PC-3 (cell line): ENCODE measurements at regions of chr22 and their contacts with region 1.

Region 1: DNA sequence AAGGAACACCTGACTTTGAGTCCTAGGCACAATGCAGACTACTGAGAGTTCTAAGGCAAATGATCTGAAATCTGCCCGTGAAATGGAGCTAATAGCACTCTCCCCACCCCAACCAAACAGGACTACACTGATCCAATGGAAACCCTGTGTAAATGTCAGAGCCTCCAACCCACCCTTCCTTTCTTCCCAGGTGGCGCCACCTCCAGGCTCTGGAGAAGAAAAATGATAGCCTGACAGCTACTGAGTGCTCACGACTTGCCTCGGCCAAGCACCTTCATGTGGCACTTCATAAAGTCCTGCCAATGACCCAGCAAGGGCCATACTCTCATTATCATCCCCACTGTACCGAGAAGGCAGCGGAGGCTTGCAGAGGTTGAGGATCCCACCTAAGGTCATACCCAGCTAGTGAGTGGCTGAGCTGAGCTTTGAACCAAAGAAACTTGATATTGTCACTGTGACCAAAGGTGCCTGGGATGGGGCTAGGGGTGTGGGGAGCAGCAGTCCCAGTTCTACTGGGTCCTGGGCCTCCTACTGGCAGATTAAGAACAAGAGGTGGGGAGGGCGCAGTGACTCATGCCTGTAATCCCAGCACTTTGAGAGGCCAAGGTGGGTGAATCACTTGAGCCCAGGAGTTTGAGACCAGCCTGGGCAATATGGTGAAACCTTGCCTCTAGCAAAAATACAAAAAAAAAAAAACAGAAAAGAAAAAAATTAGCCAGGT is 20.5 kb downstream of the TST start:
- DNase-seq: no peak
- ATAC-seq: no peak
- H3K4me3 ChIP-seq: no peak overlapping the region
- H3K27ac ChIP-seq: no peak overlapping the region
- H3K4me1 ChIP-seq: no peaks in the 10 kb centered on the region
- H3K27me3 ChIP-seq: peaks cover 2% of the 10 kb centered on the region
- CTCF ChIP-seq: peak; percentile 34; the same call in 1 of the 2 replicates

Region 2: GRCh38 chr22:37021710-37022482 is 23.1 kb after region 1 on chr22:
- CTCF ChIA-PET with region 1: no interaction called
- POLR2A ChIA-PET with region 1: no interaction called
- intact Hi-C with region 1: no loop called
- DNase-seq: peak; percentile 31
- ATAC-seq: no peak
- H3K4me3 ChIP-seq: no peak overlapping the region
- H3K27ac ChIP-seq: no peak overlapping the region
- H3K4me1 ChIP-seq: peaks cover 7% of the 10 kb centered on the region; the same call in 1 of the 2 replicates
- H3K27me3 ChIP-seq: no peaks in the 10 kb centered on the region
- CTCF ChIP-seq: peak; percentile 70

Region 3: GRCh38 chr22:37069719-37070118 is 70.9 kb after region 1 on chr22:
- CTCF ChIA-PET with region 1: interaction called, 16 read pairs
- POLR2A ChIA-PET with region 1: no interaction called
- intact Hi-C with region 1: no loop called
- DNase-seq: no peak
- ATAC-seq: no peak
- H3K4me3 ChIP-seq: no peak overlapping the region
- H3K27ac ChIP-seq: no peak overlapping the region
- H3K4me1 ChIP-seq: no peaks in the 10 kb centered on the region
- H3K27me3 ChIP-seq: 0 out of 2 replicates have a peak, but pooled peaks cover 1% of the 10 kb centered on the region
- CTCF ChIP-seq: no peak